Endothelial cell of umbilical vein (primary cell): ENCODE measurements at regions of chr10 and their contacts with region 1.

Region 1: DNA sequence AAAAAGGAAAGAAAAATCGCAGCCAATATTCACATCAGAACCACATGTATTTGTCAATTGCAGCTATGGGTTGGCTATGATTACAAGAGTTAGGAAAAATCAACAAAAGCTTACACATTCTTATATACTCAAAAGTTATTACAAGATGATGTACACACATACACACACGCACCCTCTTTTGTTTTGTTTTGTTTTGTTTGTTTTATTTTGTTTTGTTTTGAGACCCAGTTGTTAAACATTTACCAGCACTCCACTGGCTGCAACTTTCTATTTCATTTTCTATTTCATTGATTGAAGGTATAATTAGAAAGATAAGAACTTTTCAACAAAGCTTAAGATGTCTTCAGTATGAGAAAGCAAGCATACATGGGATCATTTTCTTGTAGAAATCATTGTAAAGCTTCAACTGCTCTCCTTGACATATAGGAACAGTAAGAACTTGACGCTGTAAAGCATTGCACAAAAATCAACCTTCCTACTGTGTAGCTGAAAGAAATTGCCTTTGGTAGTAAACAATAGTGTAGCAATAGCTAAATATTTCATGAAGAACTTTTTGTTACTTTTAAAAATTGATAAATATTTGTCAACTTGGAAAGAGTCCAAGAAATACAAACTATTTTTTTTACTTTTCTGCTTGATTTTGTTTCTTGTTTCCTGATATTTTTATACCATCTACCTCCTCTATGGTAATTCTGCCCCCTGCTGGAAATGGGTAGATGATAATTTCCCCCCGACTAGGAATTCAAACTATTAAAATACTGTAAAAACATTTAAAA is 205.9 kb downstream of the MBL2 start:
- DNase-seq: peak; percentile 81
- H3K4me3 ChIP-seq: no peak overlapping the region
- H3K27ac ChIP-seq: no peak overlapping the region
- H3K4me1 ChIP-seq: peaks cover 14% of the 10 kb centered on the region
- H3K27me3 ChIP-seq: no peaks in the 10 kb centered on the region
- CTCF ChIP-seq: peak; percentile 18 to 47
- POLR2A ChIP-seq: no peak

Region 2: DNA sequence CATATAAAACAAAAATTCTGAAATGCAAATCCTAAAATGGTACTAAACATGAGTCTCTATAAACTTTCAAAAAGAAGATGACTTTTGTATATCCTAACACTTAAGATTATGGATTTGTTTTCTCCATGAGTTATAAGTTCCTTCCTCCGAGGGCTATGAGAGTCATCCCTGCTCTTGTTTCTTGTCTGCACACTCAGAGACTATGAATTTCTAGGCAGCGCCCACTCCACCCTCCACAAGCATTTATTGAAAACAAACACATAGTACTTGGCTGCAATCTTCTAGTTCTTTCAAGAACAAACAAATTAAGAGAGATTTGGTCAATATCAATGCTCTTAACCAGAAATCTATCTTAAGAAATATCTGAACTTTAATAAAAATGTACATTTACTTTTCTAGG is 40.9 kb before region 1 on chr10:
- CTCF ChIA-PET with region 1: no interaction called
- POLR2A ChIA-PET with region 1: no interaction called
- dilution Hi-C with region 1: no loop called
- intact Hi-C with region 1: no loop called
- DNase-seq: peak; percentile 29
- H3K4me3 ChIP-seq: no peak overlapping the region
- H3K27ac ChIP-seq: no peak overlapping the region
- H3K4me1 ChIP-seq: peaks cover 13% of the 10 kb centered on the region
- H3K27me3 ChIP-seq: no peaks in the 10 kb centered on the region
- CTCF ChIP-seq: no peak
- POLR2A ChIP-seq: no peak

Region 3: DNA sequence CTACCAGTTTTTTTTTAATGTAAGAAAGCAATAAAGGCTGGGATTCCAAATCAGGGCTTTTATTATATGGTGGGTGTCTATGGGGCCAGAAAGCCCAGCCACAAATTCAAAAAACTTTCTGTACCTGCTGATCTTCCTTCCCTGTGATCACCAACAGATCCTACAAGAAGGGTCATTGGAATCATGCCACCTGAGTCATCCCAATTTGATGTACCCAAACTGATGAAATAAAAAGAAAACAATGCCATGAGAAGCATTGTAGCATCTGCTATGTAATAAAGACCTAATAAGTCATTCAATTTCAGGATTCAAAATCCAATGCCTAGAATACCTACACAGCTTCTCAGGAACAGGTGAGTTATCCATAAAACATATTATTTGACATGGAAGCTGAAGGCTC is 23.8 kb before region 1 on chr10:
- CTCF ChIA-PET with region 1: interaction called, 10 read pairs
- POLR2A ChIA-PET with region 1: no interaction called
- dilution Hi-C with region 1: no loop called
- intact Hi-C with region 1: no loop called
- DNase-seq: no peak
- H3K4me3 ChIP-seq: no peak overlapping the region
- H3K27ac ChIP-seq: no peak overlapping the region
- H3K4me1 ChIP-seq: peaks cover 22% of the 10 kb centered on the region
- H3K27me3 ChIP-seq: no peaks in the 10 kb centered on the region
- CTCF ChIP-seq: no peak
- POLR2A ChIP-seq: no peak

Region 4: DNA sequence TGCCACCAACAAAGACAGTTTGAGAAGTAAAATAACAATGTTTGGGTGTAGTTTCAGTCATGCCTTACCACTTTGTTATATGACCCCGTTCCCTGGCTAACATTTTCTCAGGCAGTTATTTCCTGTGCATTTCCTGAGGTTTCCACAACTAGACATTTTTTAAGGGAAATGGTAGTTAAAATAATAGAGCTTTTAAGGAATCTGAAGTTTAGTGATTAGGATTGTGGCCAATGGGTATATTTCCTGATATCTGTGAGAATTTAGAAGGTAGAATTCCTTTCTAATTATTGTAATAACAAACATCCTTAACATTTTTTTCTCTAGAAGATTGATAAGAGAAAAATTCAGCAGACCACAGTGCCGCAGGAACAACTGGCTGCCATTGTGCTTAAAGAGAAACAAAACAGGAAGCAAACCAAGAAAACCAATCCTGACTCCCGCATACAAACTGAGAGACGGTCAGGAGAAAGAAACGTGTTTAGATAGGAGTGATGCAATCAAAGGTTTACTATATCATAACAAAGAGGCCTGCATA is 12.3 kb after region 1 on chr10:
- CTCF ChIA-PET with region 1: interaction called, 41 read pairs
- POLR2A ChIA-PET with region 1: interaction called, 3 read pairs
- dilution Hi-C with region 1: no loop called
- intact Hi-C with region 1: loop called (anchors 1 kb)
- DNase-seq: peak; percentile 96
- H3K4me3 ChIP-seq: peak overlapping the region in 1 of 3 experiments; percentile 40
- H3K27ac ChIP-seq: peak overlapping the region; percentile 91
- H3K4me1 ChIP-seq: peaks cover 41% of the 10 kb centered on the region
- H3K27me3 ChIP-seq: no peaks in the 10 kb centered on the region
- CTCF ChIP-seq: no peak
- POLR2A ChIP-seq: no peak